WTC11 (cell line): ENCODE measurements at regions of chr16 and their contacts with region 1.

Region 1: GRCh38 chr16:75110637-75111513 is 5.7 kb downstream of the LDHD start:
- DNase-seq: peak; percentile 90
- ATAC-seq: peak; percentile 72
- H3K4me3 Mint-ChIP-seq: peak overlapping the region; percentile 27
- H3K27ac Mint-ChIP-seq: peak overlapping the region; percentile 38
- H3K4me1 Mint-ChIP-seq: peaks cover 53% of the 10 kb centered on the region
- H3K27me3 Mint-ChIP-seq: no peaks in the 10 kb centered on the region
- CTCF ChIP-seq: peak; percentile 80

Region 2: GRCh38 chr16:74984535-74985296 is 126.2 kb before region 1 on chr16 and contains the start of gene WDR59:
- CTCF ChIA-PET with region 1: interaction called, 39 read pairs
- POLR2A ChIA-PET with region 1: interaction called, 18 read pairs
- DNase-seq: peak; percentile 100
- ATAC-seq: peak; percentile 99
- H3K4me3 Mint-ChIP-seq: peak within 1 kb of the TSS; percentile 85
- H3K27ac Mint-ChIP-seq: peak within 1 kb of the TSS; percentile 80
- H3K4me1 Mint-ChIP-seq: peaks cover 7% of the 10 kb centered on the region
- H3K27me3 Mint-ChIP-seq: no peaks in the 10 kb centered on the region
- CTCF ChIP-seq: no peak
- total RNA-seq, gene WDR59: 100 to 111 TPM (median 102 TPM) in 3 replicates

Region 3: DNA sequence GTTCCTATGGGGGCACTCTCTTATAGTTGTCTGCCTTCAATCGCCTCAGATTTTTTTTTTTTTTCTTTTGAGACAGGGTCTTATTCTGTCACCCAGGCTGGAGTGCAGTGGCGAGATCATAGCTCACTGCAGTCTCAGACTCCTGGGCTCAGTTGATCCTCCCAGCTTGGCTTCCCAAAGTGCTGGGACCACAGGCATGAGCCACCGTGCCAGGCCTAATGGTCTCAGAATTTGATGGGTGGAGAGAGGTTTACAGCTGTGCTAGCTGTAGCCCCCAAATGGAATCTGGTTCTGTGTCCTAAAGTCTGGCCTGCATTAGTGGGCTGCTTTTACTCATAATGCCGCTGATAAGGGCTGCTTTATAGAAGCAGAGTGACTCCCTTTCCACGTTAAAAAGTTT is 107.0 kb before region 1 on chr16:
- CTCF ChIA-PET with region 1: interaction called, 158 read pairs
- POLR2A ChIA-PET with region 1: interaction called, 16 read pairs
- DNase-seq: no peak
- ATAC-seq: no peak
- H3K4me3 Mint-ChIP-seq: no peak overlapping the region
- H3K27ac Mint-ChIP-seq: no peak overlapping the region
- H3K4me1 Mint-ChIP-seq: peaks cover 49% of the 10 kb centered on the region
- H3K27me3 Mint-ChIP-seq: peaks cover 5% of the 10 kb centered on the region
- CTCF ChIP-seq: no peak

Region 4: GRCh38 chr16:75062135-75062975 is 48.5 kb before region 1 on chr16:
- CTCF ChIA-PET with region 1: interaction called, 20 read pairs
- POLR2A ChIA-PET with region 1: no interaction called
- DNase-seq: no peak
- ATAC-seq: peak; percentile 21; the same call in 1 of the 2 replicates
- H3K4me3 Mint-ChIP-seq: no peak overlapping the region
- H3K27ac Mint-ChIP-seq: peak overlapping the region; percentile 26; the same call in 1 of the 2 replicates
- H3K4me1 Mint-ChIP-seq: peaks cover 43% of the 10 kb centered on the region
- H3K27me3 Mint-ChIP-seq: no peaks in the 10 kb centered on the region
- CTCF ChIP-seq: no peak

Region 5: DNA sequence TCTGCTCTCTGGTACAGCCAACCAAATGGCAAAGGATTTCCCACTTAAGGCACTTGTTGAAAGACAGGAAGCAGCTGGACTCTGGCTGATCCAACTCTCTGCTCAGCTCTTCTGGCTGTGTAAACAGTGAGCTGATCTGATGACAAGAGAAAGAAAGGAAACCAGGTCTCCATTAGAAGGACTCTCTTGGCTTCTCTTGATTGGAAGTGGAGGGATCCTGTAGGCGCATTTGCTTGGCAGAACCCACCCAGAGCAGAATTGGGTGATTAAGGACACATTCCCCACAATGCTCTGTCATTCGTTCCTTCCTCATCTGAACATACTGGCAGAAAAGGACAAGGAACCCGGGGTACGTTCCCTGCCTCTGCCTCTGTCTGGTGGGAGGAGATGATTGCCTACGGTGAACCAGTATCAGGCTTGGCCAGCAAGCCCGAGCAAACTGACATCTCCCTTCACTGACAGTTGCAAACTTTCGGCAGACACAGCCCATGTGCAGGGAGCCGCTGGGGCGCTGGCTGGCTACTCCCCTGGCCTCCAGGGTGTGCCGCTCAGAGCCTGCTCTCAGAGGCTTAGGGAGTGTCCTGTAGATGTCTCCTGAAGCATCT is 23.4 kb before region 1 on chr16:
- CTCF ChIA-PET with region 1: interaction called, 31 read pairs
- POLR2A ChIA-PET with region 1: no interaction called
- DNase-seq: no peak
- ATAC-seq: peak; percentile 78
- H3K4me3 Mint-ChIP-seq: no peak overlapping the region
- H3K27ac Mint-ChIP-seq: 0 out of 2 replicates have a peak overlapping the region, but pooled peaks have one; percentile 30
- H3K4me1 Mint-ChIP-seq: peaks cover 46% of the 10 kb centered on the region
- H3K27me3 Mint-ChIP-seq: no peaks in the 10 kb centered on the region
- CTCF ChIP-seq: no peak

Region 6: GRCh38 chr16:75121949-75122568 is 11.2 kb after region 1 on chr16:
- CTCF ChIA-PET with region 1: interaction called, 36 read pairs
- POLR2A ChIA-PET with region 1: no interaction called
- DNase-seq: no peak
- ATAC-seq: no peak
- H3K4me3 Mint-ChIP-seq: no peak overlapping the region
- H3K27ac Mint-ChIP-seq: no peak overlapping the region; the same call in 1 of the 2 replicates
- H3K4me1 Mint-ChIP-seq: peaks cover 28% of the 10 kb centered on the region
- H3K27me3 Mint-ChIP-seq: no peaks in the 10 kb centered on the region
- CTCF ChIP-seq: no peak

Region 7: DNA sequence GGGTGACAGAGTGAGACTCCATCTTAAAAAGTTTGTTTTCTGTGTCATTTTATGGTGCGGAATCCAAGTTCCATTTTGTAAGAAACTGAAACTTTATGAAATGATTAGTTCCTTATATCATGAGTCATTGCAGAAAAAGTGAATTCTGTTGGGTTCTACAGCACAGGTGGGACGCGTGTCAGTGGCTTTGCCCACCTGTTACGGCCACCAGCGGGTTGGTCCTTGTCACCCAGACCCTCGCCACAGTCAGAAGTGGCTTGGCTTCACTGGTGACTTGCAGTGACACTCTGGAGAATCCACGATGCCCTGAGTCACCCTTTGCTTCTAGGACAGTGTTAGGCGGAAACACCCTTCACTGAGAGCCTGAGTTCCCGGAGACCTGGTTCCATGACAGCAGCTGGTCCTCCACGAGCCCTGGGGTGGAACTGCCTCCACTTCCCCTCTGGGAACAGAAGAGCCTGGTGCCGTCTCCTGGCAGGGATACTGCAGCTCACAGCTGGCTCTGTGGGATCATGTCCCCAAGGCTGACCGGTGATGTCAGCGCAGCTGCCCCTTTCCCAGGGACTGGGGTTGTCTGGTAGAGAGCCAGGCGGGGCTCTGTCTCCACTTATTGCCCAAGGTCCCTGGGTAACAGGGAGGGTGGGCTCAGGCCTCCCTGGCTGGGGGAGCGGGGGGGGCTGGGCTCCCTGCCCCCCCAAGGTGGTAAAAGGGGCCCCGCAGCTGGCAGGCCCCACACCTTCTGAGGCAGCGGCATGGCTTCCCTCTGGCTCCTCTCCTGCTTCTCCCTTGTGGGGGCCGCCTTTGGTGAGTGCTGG is 107.6 kb after region 1 on chr16 and contains the start of gene CTRB1:
- CTCF ChIA-PET with region 1: no interaction called
- POLR2A ChIA-PET with region 1: no interaction called
- DNase-seq: no peak
- ATAC-seq: no peak
- H3K4me3 Mint-ChIP-seq: no peak within 1 kb of the TSS
- H3K27ac Mint-ChIP-seq: no peak within 1 kb of the TSS
- H3K4me1 Mint-ChIP-seq: no peaks in the 10 kb centered on the region
- H3K27me3 Mint-ChIP-seq: no peaks in the 10 kb centered on the region
- CTCF ChIP-seq: no peak
- total RNA-seq, gene CTRB1: 3.9 to 5.7 TPM (median 5.7 TPM) in 3 replicates